Activated naive CD4-positive, alpha-beta T cell treated with anti-CD3 and anti-CD28 coated beads for 36 hours (primary cell): ENCODE measurements at regions of chr1 and their contacts with region 1.

Region 1: GRCh38 chr1:155091071-155091709 is 12.6 kb downstream of the EFNA3 start:
- DNase-seq: peak; percentile 84
- H3K4me3 Mint-ChIP-seq: no peak overlapping the region
- H3K27ac Mint-ChIP-seq: no peak overlapping the region
- H3K4me1 Mint-ChIP-seq: peaks cover 6% of the 10 kb centered on the region
- H3K27me3 Mint-ChIP-seq: no peaks in the 10 kb centered on the region

Region 2: DNA sequence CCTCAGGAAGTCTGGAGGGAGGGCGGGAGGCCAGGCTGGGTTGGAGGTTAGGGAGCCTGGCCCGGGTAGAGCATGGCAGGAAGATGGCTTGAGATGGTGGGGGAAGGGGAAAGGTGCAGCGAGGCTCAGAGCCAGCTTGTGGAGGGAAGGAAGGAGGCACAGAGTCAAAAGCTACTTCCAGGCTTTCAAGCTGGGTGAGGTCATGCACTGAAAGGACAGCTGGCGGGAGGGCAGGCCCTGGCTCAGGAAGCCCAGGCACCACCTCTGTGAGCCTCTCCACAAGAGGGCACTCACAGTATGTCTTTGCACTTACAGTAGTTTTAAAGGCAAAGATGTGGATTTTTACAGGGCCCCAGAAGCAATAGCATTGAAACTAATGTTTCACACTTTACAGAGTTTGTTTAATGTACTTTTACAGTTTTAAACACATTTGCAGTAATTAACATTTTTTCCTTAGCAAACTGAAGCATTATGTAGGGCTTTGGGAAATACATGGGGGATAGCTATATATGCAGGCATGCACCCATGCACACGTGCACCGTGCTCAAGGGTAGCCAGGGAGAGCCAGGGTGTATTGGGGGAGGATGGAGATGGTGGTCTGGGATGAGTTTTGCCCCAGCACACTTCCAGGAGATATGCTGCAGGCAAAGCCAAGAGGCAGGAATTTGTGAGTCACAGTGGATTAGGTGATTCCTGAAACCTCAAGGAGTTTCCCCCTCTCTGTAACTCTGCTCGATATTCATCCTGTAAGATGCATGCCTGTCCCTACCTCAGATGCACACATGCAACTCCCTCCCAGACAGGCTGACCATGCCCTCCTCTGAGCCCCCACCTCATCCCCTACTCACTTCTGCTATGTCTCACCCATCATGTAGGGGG is 46.1 kb before region 1 on chr1:
- CTCF ChIA-PET with region 1: interaction called, 20 read pairs
- intact Hi-C with region 1: no loop called
- DNase-seq: peak; percentile 79
- H3K4me3 Mint-ChIP-seq: no peak overlapping the region
- H3K27ac Mint-ChIP-seq: no peak overlapping the region
- H3K4me1 Mint-ChIP-seq: peaks cover 19% of the 10 kb centered on the region
- H3K27me3 Mint-ChIP-seq: no peaks in the 10 kb centered on the region

Region 3: GRCh38 chr1:155105604-155106022 is 14.4 kb after region 1 on chr1:
- CTCF ChIA-PET with region 1: interaction called, 10 read pairs
- intact Hi-C with region 1: no loop called
- DNase-seq: no peak
- H3K4me3 Mint-ChIP-seq: no peak overlapping the region
- H3K27ac Mint-ChIP-seq: no peak overlapping the region
- H3K4me1 Mint-ChIP-seq: no peaks in the 10 kb centered on the region
- H3K27me3 Mint-ChIP-seq: no peaks in the 10 kb centered on the region

Region 4: DNA sequence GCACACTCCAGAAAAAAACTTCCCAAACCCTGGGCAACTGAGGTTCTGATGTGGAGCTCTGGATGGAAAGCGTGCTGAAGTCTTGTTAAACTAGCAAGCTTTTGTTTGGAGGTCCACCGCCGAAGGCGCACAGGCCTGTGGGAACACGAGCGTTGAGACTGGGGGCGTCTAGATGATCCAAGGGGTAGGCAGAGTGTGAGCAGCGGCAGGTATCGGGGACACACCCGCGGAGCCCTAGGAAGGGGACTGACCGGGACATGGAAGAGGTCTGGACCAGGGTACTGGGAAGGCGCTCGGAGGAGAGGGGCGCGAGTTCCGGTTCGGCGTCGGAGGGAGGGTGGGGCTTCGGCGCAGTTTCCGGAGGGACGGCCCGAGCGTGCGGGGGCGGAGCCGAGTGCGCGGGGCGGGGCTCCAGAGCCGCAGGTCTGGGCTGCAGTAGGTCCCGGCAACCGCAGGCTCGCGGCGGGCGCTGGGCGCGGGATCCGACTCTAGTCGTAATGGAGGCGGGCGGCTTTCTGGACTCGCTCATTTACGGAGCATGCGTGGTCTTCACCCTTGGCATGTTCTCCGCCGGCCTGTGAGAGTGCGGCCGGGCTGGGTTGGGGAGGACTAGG is 44.3 kb after region 1 on chr1 and contains the start of gene SLC50A1:
- CTCF ChIA-PET with region 1: interaction called, 13 read pairs
- intact Hi-C with region 1: no loop called
- DNase-seq: peak; percentile 96
- H3K4me3 Mint-ChIP-seq: peak within 1 kb of the TSS; percentile 99
- H3K27ac Mint-ChIP-seq: peak within 1 kb of the TSS; percentile 100
- H3K4me1 Mint-ChIP-seq: peaks cover 32% of the 10 kb centered on the region
- H3K27me3 Mint-ChIP-seq: no peaks in the 10 kb centered on the region
- total RNA-seq, gene SLC50A1: 48.4 to 52.7 TPM

Region 5: DNA sequence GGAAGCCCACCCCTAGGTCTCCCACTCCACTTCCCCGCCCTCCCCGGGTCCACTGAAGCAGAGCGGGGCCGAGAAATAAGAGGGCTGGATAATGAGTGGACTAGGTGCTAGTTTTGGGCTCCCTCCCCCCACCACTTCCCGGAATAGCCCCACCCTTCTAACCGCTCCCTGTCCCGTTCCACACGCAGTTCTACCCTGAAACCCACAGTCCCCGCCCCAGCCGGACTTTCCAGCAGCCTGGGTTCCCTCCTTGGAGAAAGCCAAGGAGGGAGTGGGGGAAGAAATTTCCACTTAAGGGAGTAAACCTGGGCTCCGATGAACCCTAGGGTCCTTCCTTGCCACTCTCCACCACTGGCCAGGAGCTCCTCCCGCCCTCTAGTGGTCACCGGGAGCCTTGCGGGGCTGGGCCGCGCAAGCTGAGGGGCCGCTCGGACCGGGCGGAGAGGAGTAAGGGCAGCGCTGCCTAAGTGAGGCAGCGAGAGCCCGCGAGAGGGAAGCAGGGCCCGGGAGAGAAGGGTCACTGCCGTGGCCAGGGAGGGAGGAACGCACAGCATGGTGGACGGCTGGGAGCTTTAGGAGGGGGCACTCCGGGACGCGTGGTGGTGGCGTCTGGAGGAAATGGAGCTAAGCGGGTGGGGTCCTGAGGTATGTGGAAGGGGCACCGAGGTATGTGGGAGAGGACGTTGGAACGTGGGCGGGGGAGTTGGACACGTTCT is 102.2 kb after region 1 on chr1:
- CTCF ChIA-PET with region 1: interaction called, 11 read pairs
- intact Hi-C with region 1: no loop called
- DNase-seq: peak; percentile 86
- H3K4me3 Mint-ChIP-seq: peak overlapping the region; percentile 93
- H3K27ac Mint-ChIP-seq: peak overlapping the region; percentile 96
- H3K4me1 Mint-ChIP-seq: peaks cover 27% of the 10 kb centered on the region
- H3K27me3 Mint-ChIP-seq: no peaks in the 10 kb centered on the region